Adrenal gland (tissue), 19 donors: ENCODE measurements at regions of chr2 and their contacts with region 1.

Region 1: DNA sequence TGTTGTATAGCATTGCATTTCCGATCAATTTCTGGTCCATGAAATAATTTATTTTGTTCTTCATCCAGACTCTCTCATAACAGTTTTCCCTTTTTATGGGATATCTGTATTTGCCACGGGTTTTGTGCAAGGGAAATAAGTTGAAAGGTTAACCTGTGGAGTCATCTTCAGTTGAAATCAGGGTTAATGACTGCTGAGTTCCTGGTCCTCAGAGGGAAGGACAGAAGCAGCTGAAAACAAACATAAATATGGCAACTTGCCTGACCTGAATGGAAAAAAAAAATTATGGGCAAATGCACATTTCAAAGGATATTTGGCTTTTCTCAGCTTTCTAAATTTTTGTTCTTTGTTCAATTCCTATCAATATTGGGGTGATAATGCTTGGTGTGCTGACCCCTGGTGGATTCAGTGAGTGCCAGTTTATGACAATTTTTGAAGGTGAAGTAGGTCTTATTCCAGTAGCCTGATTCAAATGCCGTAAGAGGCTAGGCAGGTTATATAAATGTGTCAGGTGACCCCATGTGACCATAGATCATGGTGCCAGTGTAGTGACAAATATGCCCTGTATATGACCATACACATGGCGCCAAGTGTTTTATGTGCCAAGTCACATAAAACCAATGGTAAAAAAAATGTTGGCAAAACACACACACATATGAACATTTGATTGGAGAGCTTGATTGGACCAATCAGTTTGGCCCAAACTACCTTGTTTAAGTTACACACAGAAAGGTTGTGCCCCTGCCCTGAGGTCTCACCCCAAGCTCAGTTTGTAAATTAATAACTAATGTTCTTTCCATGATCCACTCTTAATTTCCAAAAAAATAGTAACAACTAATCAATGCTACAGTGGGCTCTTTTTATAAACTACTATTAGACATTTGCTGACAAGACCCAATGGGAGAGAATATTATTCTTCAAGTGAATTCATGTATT is 47.6 kb upstream of the FAM124B start:
- DNase-seq: peak in 1 of 7 donors; percentile 12
- H3K4me3 ChIP-seq: no peak overlapping the region
- H3K27ac ChIP-seq: no peak overlapping the region
- H3K4me1 ChIP-seq: no peaks in the 10 kb centered on the region
- H3K27me3 ChIP-seq: no peaks in the 10 kb centered on the region
- CTCF ChIP-seq: peak; percentile 29 to 57 (median 45)
- POLR2A ChIP-seq: no peak

Region 2: DNA sequence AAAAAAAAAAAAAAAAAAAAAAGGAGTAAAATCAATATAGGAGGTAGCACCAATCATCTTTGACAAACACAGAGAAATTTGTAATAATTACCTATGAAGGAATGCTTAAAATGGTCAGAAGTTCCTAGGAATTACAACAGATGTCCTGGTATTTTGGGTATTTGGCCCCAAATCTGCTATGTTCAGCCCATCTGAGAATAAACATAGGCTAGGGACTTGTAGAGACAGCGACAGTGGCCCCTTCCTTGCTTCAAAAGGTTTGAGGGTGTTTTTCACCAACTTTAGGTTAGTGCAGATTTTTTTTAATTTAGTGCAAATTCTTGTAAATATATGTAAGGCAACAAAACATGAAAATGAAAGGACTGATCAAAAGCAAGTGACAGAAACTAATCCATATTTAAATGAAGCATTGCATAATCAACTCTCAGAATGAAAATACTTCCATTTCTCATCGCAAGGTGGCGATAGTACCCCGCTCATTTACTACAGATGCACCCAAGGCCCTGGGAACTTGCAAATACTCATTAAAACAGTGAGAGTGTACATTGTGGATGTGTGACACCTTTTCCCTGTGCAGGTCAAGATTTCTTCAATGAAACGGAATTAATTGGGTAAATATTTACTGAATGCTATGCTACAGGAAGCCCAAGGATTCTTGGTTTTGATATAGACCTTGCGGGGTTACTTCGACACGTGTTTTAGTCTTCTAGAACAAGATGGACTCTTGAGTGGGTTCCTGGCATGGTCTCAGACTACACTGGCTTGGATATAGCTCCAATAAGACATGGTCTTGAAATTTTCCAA is 92.2 kb before region 1 on chr2:
- intact Hi-C with region 1: loop called (anchors 10 kb)
- DNase-seq: peak; percentile 36 to 77 (median 53)
- H3K4me3 ChIP-seq: no peak overlapping the region
- H3K27ac ChIP-seq: no peak overlapping the region
- H3K4me1 ChIP-seq: no peaks in the 10 kb centered on the region
- H3K27me3 ChIP-seq: no peaks in the 10 kb centered on the region
- CTCF ChIP-seq: peak; percentile 65 to 94 (median 85)
- POLR2A ChIP-seq: no peak

Region 3: GRCh38 chr2:224369028-224369632 is 80.3 kb before region 1 on chr2:
- intact Hi-C with region 1: loop called in 1 of 2 experiments (anchors 10 kb)
- DNase-seq: peak in 1 of 7 donors; percentile 16
- H3K4me3 ChIP-seq: no peak overlapping the region
- H3K27ac ChIP-seq: no peak overlapping the region
- H3K4me1 ChIP-seq: no peaks in the 10 kb centered on the region
- H3K27me3 ChIP-seq: no peaks in the 10 kb centered on the region
- CTCF ChIP-seq: peak; percentile 29 to 74 (median 53)
- POLR2A ChIP-seq: no peak

Region 4: GRCh38 chr2:224747765-224748164 is 298.3 kb after region 1 on chr2:
- intact Hi-C with region 1: no loop called
- DNase-seq: no peak
- H3K4me3 ChIP-seq: no peak overlapping the region
- H3K27ac ChIP-seq: no peak overlapping the region
- H3K4me1 ChIP-seq: no peaks in the 10 kb centered on the region
- H3K27me3 ChIP-seq: no peaks in the 10 kb centered on the region
- CTCF ChIP-seq: no peak
- POLR2A ChIP-seq: no peak